Naive thymus-derived CD4-positive, alpha-beta T cell (primary cell): ENCODE measurements at regions of chr1 and their contacts with region 1.

Region 1: GRCh38 chr1:2205191-2205952 is 10.8 kb upstream of the FAAP20 start:
- DNase-seq: peak; percentile 86 to 94 (median 93)
- ATAC-seq: peak; percentile 98
- H3K4me3 ChIP-seq: peak overlapping the region; percentile 70
- H3K4me3 Mint-ChIP-seq: peak overlapping the region; percentile 53 to 79 (median 68)
- H3K27ac ChIP-seq: peak overlapping the region; percentile 60
- H3K27ac Mint-ChIP-seq: peak overlapping the region in 5 of 9 donors; percentile 17 to 65 (median 56)
- H3K4me1 ChIP-seq: peaks cover 0 to 6% of the 10 kb centered on the region in 2 donors
- H3K4me1 Mint-ChIP-seq: peaks cover 0 to 9% (median 4%) of the 10 kb centered on the region in 7 donors
- H3K27me3 ChIP-seq: no peaks in the 10 kb centered on the region
- H3K27me3 Mint-ChIP-seq: peaks cover 0 to 4% (median 0%) of the 10 kb centered on the region in 5 donors

Region 2: GRCh38 chr1:1919304-1920056 is 285.9 kb before region 1 on chr1:
- CTCF ChIA-PET with region 1: no interaction called
- POLR2A ChIA-PET with region 1: no interaction called
- intact Hi-C with region 1: loop called in 1 of 2 experiments (anchors 1 kb)
- DNase-seq: peak; percentile 99 to 100 (median 100)
- ATAC-seq: peak; percentile 95
- H3K4me3 ChIP-seq: peak overlapping the region; percentile 61
- H3K4me3 Mint-ChIP-seq: peak overlapping the region; percentile 52 to 79 (median 68)
- H3K27ac ChIP-seq: peak overlapping the region; percentile 58
- H3K27ac Mint-ChIP-seq: peak overlapping the region in 8 of 9 donors; percentile 51 to 89 (median 82)
- H3K4me1 ChIP-seq: peaks cover 7 to 16% of the 10 kb centered on the region in 2 donors
- H3K4me1 Mint-ChIP-seq: peaks cover 0 to 7% (median 0%) of the 10 kb centered on the region in 7 donors
- H3K27me3 ChIP-seq: no peaks in the 10 kb centered on the region
- H3K27me3 Mint-ChIP-seq: peaks cover 0 to 4% (median 0%) of the 10 kb centered on the region in 5 donors

Region 3: DNA sequence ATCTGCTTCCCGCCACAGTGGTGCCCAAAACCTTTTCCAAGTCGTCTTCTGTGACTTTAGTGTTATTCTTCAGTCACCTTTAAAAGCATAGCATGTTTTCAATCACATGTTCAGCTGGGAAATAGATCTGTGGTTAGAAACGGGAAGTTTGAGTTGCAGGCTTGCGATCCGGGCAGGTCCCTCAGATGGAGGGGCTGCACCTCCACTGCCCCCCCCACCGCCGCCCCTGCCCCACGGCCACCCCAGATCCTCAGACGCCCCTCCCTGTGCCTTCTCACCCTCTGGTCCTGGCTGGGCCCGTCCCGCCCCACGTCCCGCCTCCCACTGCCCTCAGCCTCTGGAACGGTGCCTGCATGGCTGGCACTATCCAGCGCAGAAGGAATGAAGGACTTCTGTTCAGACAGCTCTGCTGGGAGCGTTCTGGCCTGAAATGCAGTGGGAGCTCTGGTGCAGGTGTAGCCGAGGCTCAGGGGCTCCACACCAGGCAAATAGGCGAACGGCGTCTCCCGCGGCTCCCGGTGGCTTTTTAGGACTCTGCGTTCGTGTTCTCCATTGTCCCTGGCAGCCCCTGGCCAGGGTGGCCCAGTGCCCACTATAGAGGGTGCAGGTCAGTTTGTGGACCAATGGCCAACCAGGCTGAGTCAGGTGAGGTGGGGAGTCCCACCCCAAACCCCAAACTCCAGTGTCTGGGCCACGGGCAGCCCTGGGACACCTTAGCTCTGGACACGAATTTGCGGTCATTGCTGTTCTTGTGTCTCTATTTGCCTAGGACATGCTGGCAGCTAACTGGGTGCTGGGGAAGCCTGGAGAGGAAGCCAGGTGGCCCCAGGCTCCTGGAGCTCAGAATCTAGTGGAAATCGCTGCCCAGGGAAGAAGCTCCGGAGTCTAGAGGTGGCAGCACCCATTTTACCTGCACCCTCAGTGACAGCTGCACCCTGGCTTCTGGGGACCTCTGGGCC is 77.9 kb before region 1 on chr1:
- CTCF ChIA-PET with region 1: no interaction called
- POLR2A ChIA-PET with region 1: no interaction called
- intact Hi-C with region 1: no loop called
- DNase-seq: peak in 1 of 9 donors; percentile 14
- ATAC-seq: peak; percentile 55
- H3K4me3 ChIP-seq: peak overlapping the region; percentile 20
- H3K4me3 Mint-ChIP-seq: peak overlapping the region; percentile 74 to 90 (median 82)
- H3K27ac ChIP-seq: peak overlapping the region; percentile 51
- H3K27ac Mint-ChIP-seq: peak overlapping the region; percentile 46 to 98 (median 88)
- H3K4me1 ChIP-seq: peaks cover 5 to 20% of the 10 kb centered on the region in 2 donors
- H3K4me1 Mint-ChIP-seq: peaks cover 6 to 36% (median 16%) of the 10 kb centered on the region in 7 donors
- H3K27me3 ChIP-seq: no peaks in the 10 kb centered on the region
- H3K27me3 Mint-ChIP-seq: no peaks in the 10 kb centered on the region

Region 4: DNA sequence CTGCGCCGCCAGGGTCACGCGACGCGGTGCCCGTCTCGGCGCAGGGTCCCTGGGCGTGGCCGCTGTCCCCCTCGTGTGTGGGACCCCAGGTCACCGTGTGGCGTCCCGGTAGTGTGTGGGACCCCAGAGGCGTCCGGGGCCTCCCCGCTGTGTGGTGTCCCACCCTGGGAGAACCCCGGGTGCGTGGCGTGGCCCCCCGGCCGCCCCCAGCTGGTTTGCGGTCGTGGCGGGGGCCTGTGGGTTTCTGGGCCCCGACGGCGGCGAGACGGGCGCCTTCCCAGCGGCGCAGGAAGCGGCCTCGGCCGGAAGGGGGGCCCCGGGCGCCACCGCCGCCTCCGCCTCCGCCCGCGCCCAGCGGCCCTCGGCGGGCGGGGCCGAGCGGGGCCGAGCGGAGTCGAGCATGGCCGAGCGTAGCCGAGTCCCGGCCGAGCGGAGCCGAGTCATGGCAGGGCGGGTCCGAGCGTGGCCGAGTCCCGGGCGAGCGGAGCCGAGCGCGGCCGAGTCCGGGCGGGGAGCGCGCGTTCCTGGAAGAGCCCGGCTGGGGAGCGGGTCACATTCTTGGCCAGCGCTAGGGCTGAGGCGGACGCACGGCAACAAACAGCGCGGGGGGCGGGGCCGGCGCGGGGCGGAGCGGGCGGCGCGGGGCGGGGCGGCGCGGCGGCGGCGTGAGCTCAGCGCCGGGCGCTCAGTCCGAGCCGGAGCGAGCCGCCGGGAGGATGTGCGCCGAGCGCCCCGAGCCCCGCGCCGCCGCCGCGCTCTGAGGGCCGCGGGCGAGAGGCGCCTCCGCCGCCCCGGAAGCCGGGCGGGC is 22.2 kb after region 1 on chr1:
- CTCF ChIA-PET with region 1: no interaction called
- POLR2A ChIA-PET with region 1: interaction called, 47 read pairs
- intact Hi-C with region 1: loop called (anchors 1 to 2 kb)
- DNase-seq: peak; percentile 87 to 98 (median 97)
- ATAC-seq: peak; percentile 88
- H3K4me3 ChIP-seq: peak overlapping the region; percentile 33
- H3K4me3 Mint-ChIP-seq: peak overlapping the region in 9 of 10 donors; percentile 56 to 83 (median 69)
- H3K27ac ChIP-seq: peak overlapping the region; percentile 72
- H3K27ac Mint-ChIP-seq: peak overlapping the region in 4 of 9 donors; percentile 26 to 80 (median 62)
- H3K4me1 ChIP-seq: peaks cover 5 to 14% of the 10 kb centered on the region in 2 donors
- H3K4me1 Mint-ChIP-seq: peaks cover 9 to 24% (median 17%) of the 10 kb centered on the region in 7 donors
- H3K27me3 ChIP-seq: no peaks in the 10 kb centered on the region
- H3K27me3 Mint-ChIP-seq: peaks cover 0 to 8% (median 0%) of the 10 kb centered on the region in 5 donors

Region 5: DNA sequence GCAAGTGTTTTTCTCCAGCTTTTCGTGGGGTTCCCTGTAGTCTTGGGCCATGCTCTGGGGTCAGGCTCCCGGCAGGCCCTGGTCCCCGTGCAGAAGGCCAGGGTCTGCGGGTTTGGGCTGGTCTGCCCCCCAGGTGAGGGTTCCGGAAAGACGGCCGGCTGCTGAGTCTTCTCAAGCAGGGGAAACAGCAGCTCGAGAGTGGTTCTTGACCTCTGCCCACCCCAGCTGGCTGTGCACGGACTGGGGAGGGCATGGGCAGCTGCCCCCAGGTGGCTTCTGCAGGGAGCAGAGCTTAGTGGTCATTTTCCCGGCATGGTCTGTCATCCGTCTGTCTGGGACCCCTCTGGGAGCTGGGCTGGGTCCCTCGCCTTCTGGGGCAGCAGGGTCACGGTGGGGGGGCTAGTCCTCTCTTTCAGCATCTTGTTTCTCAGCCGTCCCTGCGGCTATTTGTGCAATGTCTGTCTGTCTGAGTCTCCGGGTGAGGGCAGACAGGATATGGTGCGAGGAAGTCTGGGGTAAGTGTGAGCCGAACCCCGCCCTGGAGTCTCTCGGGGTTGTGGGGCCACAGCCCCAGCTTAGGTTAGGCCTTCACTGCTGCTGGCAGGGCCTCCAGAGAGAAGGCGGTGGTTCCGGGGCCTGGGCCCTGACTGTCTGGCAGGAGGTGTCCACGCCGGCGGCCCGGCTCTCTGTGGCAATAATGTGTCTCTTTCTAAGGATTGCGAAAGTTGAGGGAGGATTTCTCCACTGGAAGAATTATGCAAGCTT is 28.8 kb after region 1 on chr1:
- CTCF ChIA-PET with region 1: no interaction called
- POLR2A ChIA-PET with region 1: interaction called, 47 read pairs
- intact Hi-C with region 1: loop called (anchors 1 to 2 kb)
- DNase-seq: peak; percentile 52 to 82 (median 72)
- ATAC-seq: peak; percentile 80
- H3K4me3 ChIP-seq: peak overlapping the region; percentile 83
- H3K4me3 Mint-ChIP-seq: peak overlapping the region; percentile 89 to 100 (median 94)
- H3K27ac ChIP-seq: peak overlapping the region; percentile 78
- H3K27ac Mint-ChIP-seq: peak overlapping the region; percentile 90 to 99 (median 97)
- H3K4me1 ChIP-seq: peaks cover 64 to 78% of the 10 kb centered on the region in 2 donors
- H3K4me1 Mint-ChIP-seq: peaks cover 50 to 70% (median 61%) of the 10 kb centered on the region in 7 donors
- H3K27me3 ChIP-seq: no peaks in the 10 kb centered on the region
- H3K27me3 Mint-ChIP-seq: no peaks in the 10 kb centered on the region

Region 6: DNA sequence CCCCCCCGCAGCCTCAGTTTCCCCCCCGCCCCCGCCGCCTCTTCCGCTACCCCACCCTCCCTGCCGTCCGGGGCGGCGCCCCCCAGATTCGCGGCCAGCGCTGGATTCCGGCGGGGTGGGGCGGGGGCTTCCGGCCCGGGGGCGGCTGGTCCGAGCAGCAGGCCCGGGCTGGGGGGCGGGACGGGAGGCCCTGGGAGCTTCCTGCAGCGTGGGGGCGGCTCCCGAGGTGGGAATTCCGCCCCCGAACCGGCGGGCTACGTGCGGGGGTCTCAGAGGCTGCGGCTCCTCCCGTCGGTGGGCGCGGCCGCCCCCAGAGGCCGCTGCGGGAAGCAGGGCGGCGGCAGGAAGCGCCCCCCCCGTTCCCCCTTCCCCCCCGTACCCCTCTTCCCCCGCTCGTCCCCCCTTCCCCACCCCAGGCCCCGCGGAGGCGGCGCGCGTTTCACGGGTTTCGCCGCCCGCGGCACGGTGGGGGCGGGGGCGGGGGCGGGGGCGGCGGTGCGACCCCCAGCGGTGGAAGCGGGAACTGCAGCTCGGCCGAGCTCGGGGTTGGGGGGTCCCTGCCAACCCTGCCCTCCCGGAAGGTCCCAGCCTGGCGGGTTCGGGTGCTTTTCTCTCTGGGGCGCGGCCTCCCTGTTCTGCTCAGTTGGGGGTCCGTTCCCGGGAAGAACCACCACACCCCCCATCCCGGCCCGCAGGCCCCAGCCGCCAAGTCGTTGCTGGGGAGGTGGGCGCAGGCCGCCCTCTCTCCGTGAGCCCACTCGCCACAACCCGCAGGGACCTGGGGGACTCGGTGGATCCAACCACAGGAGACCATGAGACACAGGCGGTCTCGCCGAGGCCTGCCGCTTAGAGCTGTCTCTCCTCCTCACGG is 109.7 kb after region 1 on chr1:
- CTCF ChIA-PET with region 1: no interaction called
- POLR2A ChIA-PET with region 1: interaction called, 4 read pairs
- intact Hi-C with region 1: loop called in 1 of 2 experiments (anchors 1 kb)
- DNase-seq: peak; percentile 56 to 77 (median 70)
- ATAC-seq: peak; percentile 81
- H3K4me3 ChIP-seq: peak overlapping the region; percentile 55
- H3K4me3 Mint-ChIP-seq: peak overlapping the region in 9 of 10 donors; percentile 12 to 73 (median 64)
- H3K27ac ChIP-seq: peak overlapping the region; percentile 84
- H3K27ac Mint-ChIP-seq: peak overlapping the region in 8 of 9 donors; percentile 38 to 86 (median 65)
- H3K4me1 ChIP-seq: peaks cover 29 to 42% of the 10 kb centered on the region in 2 donors
- H3K4me1 Mint-ChIP-seq: peaks cover 3 to 19% (median 12%) of the 10 kb centered on the region in 7 donors
- H3K27me3 ChIP-seq: no peaks in the 10 kb centered on the region
- H3K27me3 Mint-ChIP-seq: no peaks in the 10 kb centered on the region